GM13977 (cell line): ENCODE measurements at regions of chr19 and their contacts with region 1.

Region 1: GRCh38 chr19:14582894-14583340 is at the start of gene CLEC17A:
- DNase-seq: peak; percentile 58
- CTCF ChIP-seq: no peak

Region 2: DNA sequence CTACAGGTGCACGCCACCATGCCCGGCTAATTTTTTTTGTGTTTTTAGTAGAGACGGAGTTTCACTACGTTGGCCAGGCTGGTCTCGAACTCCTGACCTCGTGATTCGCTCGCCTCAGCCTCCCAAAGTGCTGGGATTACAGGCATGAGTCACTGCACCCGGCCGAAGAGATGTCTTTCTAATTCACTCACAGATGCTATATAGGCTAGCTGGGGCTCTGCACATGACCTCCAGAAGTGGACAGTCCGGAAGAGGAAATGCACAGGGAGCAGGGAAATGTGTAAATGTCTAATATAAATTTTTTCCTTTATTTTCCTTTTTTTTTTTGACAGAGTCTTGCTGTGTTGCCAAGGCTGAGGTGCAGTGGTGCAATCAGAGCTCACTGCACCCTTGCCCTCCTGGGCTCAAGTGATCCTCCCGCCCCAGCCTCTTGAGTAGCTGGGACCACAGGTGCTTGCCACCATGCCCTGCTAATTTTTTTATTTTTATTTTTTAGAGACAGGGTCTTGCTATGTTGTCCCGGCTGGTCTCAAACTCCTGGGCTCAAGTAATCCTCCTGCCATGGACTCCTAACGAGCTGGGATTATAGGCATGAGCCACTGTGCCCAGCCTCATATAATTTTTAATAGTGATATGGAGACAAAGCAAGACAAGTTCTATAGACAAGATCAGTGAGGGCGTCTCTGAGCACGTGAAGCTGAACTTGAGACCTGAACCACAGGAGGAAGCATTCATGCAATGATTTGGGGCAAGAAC is 95.4 kb before region 1 on chr19:
- in situ Hi-C with region 1: no loop called
- DNase-seq: no peak
- CTCF ChIP-seq: no peak

Region 3: DNA sequence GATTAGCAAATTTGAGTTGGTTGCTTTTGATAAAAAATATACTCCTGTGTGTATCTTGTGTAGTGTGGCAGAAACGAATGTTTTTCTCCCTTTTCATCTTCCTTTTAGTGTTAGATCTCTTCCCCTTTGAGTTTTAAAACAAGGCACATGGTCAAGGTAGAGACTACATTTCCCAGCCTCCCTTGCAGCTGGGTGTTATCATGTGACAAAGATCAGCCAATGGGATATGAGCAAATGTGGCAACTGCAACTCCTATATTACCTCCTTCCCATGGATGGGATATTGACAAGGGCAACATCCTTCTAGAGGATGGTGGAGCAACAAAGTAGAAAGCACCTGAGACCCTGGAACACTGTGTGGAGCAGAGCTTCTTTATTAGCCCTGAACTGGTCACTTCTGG is 49.4 kb after region 1 on chr19:
- in situ Hi-C with region 1: no loop called
- DNase-seq: peak; percentile 42
- CTCF ChIP-seq: no peak

Region 4: DNA sequence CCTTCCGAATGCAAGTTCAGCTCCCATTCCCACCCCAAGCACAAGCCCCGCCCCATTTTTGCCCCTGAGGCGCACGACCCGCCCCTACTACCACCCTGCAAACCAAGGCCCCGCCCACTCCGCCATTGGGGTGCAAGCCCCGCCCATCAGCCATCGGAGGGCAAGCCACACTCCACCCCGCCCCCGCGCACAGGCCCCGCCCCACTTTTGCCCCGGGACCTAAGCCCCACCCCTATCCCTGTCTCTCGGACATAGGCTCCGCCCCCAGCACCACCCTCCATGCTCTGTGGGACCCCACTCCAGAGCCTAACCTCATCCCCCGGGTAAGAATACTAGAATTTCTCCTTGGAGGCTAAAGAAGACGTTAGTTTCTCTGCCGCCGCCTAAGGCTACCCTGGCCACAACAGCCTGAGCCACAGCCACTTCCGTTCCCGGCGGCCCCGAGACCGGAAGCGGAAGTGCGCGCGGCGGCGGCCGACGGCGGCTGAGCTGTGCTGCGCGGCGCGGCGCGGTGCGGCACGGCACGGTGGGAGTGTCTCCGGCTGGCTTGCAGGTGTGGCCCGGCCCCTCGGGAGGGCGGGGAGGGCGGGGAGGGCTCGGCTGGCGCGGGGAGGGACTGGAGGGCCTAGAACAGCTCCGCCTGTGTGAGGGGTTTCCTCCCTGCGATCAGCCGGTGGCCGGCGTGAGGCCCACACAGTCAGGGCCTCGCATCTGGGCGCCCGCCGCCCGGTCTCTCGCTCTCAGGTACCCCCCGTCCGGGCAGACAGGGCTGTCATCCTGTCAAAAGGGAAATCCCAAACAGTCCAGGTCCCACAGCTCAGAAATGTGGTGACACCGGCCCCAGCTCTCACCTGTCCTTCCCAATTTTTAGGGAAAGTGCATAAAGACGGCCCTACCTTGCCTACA is 106.9 kb after region 1 on chr19 and contains the start of gene ZNF333:
- in situ Hi-C with region 1: loop called (anchors 5 kb)
- DNase-seq: peak; percentile 96
- CTCF ChIP-seq: no peak